Ascending aorta (tissue), 2 donors: ENCODE measurements at regions of chr1 and their contacts with region 1.

Region 1: GRCh38 chr1:153749408-153750005 is 21.7 kb downstream of the INTS3 start:
- DNase-seq: peak; percentile 82 to 96
- H3K4me3 ChIP-seq: no peak overlapping the region
- H3K27ac ChIP-seq: peak overlapping the region; percentile 91 to 94
- H3K4me1 ChIP-seq: peaks cover 41 to 65% of the 10 kb centered on the region in 2 donors
- H3K27me3 ChIP-seq: no peaks in the 10 kb centered on the region
- CTCF ChIP-seq: peak; percentile 89 to 93 (median 93)

Region 2: GRCh38 chr1:153677718-153678505 is 71.6 kb before region 1 on chr1:
- intact Hi-C with region 1: loop called (anchors 1 kb)
- DNase-seq: peak in 1 of 2 donors; percentile 83
- H3K4me3 ChIP-seq: peak overlapping the region; percentile 81 to 92
- H3K27ac ChIP-seq: peak overlapping the region; percentile 88 to 96
- H3K4me1 ChIP-seq: peaks cover 0 to 7% of the 10 kb centered on the region in 2 donors
- H3K27me3 ChIP-seq: no peaks in the 10 kb centered on the region
- CTCF ChIP-seq: peak; percentile 90 to 94 (median 91)

Region 3: DNA sequence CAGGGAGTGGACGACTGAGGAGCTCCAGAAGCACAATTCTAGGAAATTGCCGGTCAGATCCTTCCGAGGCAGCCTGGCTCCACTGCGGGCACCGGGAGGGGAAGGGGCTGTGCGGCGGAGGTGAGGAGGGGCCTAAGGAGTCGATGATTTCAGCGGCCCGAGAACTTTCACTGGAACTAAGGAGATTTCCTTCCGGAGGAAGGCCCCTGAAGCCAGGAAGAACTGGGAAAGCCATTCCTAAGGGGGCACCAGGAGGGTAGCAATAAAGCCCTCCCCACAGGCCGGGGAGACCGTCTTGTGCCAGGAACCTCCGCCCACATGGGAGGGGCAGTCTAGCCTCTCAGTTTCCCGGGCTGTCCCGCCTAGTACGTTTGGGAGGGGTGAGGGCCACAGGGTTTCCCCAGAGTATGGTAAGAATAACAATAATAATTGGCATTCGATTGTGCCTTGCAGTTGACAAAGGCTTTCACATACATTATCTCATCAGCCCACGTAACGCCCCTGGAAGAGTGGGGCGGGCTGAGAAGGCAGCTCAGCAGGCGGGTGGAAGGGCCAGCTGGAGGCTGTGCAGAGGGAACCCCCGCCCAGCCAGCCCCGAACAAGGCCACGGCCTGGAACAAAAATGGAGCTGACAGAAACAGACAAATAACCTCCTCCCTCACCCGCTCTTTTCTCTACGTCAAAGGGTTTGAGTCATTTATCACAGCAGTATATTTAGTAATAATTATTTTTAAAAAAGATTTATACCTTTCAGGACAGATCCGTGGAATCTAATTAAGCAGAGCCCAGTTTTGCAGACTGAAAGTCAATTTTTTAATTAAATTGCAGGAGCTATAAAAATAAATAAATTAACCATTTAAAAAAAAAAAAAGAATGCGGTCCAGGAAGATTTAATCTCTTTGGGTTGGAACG is 51.2 kb before region 1 on chr1:
- intact Hi-C with region 1: loop called (anchors 1 kb)
- DNase-seq: peak; percentile 54 to 93
- H3K4me3 ChIP-seq: peak overlapping the region; percentile 33 to 38
- H3K27ac ChIP-seq: peak overlapping the region; percentile 99 to 100
- H3K4me1 ChIP-seq: peaks cover 16 to 33% of the 10 kb centered on the region in 2 donors
- H3K27me3 ChIP-seq: no peaks in the 10 kb centered on the region
- CTCF ChIP-seq: no peak

Region 4: DNA sequence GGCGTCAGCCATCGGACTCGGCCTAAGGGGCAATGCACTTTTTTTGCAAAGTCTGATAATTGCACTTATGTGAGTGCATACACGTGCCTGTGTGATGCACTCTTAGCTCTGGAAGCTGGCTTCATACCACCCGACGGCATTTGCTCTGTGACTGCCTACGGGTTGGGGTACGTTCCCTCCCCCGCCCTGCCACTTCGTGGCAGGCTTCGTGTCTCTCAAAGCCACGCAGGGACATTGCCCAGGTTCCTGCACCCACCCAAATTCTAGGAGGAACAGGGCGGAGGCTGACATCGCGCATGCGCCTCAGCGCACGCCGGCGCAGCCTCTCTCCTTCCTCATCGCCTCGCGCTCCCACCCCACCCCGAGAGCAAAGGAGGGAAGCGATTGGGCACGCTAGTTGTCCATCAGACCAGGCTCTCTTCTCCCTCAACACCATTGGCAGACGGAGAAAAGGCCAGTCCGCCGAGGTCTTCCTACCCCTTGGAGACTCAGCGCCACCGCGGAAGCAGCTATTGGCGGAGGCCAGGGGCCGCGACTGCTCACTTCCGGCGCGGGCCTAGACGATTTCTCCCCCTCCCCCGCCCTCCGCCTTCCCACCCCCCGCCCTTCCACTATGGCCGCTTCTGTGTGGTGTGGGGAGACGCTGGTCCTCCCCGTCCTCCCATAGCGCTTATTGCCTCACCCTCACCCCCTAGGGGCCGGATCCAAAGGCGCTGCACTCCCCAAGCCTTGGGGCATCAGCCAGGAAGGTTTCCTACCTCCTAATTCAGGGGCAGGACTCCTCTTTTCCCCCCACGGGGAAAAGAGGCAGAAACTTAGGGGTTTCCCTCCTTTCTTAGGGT is 21.8 kb before region 1 on chr1 and contains the start of gene INTS3:
- intact Hi-C with region 1: loop called (anchors 1 kb)
- DNase-seq: peak; percentile 99 to 100
- H3K4me3 ChIP-seq: peak within 1 kb of the TSS; percentile 68 to 83
- H3K27ac ChIP-seq: peak within 1 kb of the TSS; percentile 97 to 98
- H3K4me1 ChIP-seq: peaks cover 0 to 33% of the 10 kb centered on the region in 2 donors
- H3K27me3 ChIP-seq: no peaks in the 10 kb centered on the region
- CTCF ChIP-seq: no peak
- total RNA-seq, gene INTS3: 55.9 TPM

Region 5: GRCh38 chr1:153775458-153776327 is 26.2 kb after region 1 on chr1:
- intact Hi-C with region 1: loop called (anchors 2 kb)
- DNase-seq: peak in 1 of 2 donors; percentile 88
- H3K4me3 ChIP-seq: peak overlapping the region; percentile 78 to 85
- H3K27ac ChIP-seq: peak overlapping the region; percentile 92 to 93
- H3K4me1 ChIP-seq: peaks cover 22 to 60% of the 10 kb centered on the region in 2 donors
- H3K27me3 ChIP-seq: no peaks in the 10 kb centered on the region
- CTCF ChIP-seq: peak in 1 of 3 experiments; percentile 25